ENCODE measurements at regions of chr1 and their contacts with region 1.

Region 1: DNA sequence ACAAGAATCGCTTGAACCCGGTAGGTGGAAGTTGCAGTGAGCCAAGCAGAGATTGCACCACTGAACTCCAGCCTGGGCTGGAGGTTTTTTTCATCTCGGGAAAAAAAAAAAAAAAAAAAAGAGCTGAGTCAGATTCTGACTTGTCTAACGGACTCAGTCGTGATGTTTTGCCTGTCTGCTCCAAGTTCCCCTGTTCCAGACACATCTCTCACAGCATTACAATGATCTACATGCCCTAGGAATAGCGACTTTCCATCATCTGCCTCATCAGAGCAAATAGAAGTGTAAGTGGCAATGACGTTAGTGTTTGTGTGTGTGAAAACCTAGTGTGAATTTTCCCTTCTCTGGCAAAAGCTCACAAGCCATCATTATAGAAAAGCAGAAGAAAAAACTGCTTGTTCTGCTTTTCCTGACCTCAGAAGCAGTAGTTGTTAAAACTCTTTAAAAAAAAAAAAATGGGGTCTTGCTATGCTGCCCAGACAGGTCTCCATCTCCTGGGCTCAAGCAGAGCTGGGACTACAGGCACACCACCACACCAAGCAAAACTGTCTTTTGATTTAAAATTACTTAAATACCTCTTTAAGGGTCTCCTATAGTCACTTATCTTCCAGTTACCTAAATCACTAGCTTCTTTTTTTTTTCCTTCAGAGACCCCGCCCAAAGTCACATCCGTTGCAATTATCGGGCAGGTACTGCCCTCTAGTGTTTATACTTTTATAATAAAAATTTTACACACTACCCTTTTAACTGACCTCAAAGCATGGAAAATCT is 37.3 kb downstream of the PLEKHO1 start:
- DNase-seq: no peak
- H3K4me3 Mint-ChIP-seq: no peak overlapping the region
- H3K27ac Mint-ChIP-seq: no peak overlapping the region
- H3K4me1 Mint-ChIP-seq: peaks cover 8% of the 10 kb centered on the region
- H3K27me3 Mint-ChIP-seq: peaks cover 1% of the 10 kb centered on the region

Region 2: DNA sequence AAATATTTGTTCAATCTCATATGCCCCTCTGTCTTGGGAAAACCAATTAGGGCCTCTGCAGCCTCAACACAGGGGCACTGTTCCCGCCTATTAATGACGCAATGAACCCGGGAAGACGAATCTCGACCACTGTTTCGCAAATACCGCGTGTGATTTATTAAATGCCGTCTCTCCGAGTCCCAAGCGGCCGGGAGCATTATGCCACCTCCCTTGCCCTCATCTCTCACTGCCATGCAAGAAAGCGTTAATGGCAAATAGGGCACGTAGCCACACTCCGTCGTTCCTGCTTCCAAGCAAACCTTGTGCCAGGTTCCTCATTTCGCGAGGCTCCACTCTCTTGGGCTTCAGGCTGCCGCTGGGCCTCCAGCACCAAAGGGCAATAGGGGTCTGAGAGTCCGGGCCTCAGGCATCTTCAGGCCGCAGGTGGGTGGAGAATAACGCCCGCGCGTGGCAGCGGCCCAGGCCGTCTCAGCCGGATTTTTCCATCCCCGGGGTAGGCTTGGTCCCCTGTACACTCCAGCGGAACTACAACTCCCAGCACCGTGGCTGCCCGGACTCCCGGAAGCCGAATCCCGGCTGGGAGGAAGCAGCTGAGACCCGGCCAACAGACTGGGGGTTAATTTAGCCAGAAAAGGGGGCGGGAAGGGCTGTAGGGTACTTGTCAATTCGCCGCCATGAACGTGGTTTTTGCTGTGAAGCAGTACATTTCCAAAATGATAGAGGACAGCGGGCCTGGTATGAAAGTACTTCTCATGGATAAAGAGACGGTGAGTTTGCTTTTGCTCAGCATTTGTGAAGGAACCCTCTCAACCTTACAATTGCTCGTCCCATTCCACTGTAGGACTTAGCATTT is 119.6 kb before region 1 on chr1 and contains the start of gene VPS45:
- intact Hi-C with region 1: loop called (anchors 1 kb)
- DNase-seq: peak; percentile 80
- H3K4me3 Mint-ChIP-seq: peak within 1 kb of the TSS; percentile 94
- H3K27ac Mint-ChIP-seq: peak within 1 kb of the TSS; percentile 97
- H3K4me1 Mint-ChIP-seq: peaks cover 31% of the 10 kb centered on the region
- H3K27me3 Mint-ChIP-seq: peaks cover 1% of the 10 kb centered on the region
- total RNA-seq, gene VPS45: 21.9 TPM in 2 replicates

Measured in activated T-helper 2 cell treated with anti-CD3 and anti-CD28 coated beads, Interferon-gamma antibody, Interleukin-2, Interleukin-4, amounts not matched to agents 10 μg/mL and 5 μg/mL and 100 μg/mL, durations not matched to agents 14 hours and 24 hours and 36 hours (primary cell).